ENCODE measurements at regions of chr19 and their contacts with region 1.

Region 1: DNA sequence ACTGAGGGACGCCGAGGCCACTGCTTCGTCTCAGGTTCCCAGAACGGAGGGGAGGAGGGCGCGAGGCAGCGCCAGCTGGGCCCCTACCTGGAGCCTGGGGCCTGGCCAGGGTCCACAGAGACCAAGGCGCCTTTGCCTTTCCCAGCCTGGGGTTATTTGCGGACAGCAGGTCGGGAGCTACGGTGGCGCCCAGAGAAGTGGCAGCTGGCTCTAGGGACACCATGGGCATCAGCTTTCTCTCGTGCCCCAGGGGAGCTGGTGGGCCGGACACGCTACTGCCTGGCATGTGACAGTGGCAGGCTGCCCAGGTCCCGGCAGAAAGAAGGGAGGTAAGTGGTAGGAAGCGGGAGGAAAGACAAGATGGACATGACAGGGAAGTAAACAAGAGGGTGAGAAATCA is 19.0 kb downstream of the AKT2 start:
- DNase-seq: no peak
- H3K4me3 ChIP-seq: no peak overlapping the region
- H3K27ac ChIP-seq: no peak overlapping the region
- H3K4me1 ChIP-seq: peaks cover 0 to 7% (median 1%) of the 10 kb centered on the region in 4 experiments; a peak in 3 of 7 replicates
- H3K27me3 ChIP-seq: no peaks in the 10 kb centered on the region
- CTCF ChIP-seq: no peak
- EP300 ChIP-seq: no peak
- POLR2A ChIP-seq: no peak
- RAD21 ChIP-seq: no peak

Region 2: DNA sequence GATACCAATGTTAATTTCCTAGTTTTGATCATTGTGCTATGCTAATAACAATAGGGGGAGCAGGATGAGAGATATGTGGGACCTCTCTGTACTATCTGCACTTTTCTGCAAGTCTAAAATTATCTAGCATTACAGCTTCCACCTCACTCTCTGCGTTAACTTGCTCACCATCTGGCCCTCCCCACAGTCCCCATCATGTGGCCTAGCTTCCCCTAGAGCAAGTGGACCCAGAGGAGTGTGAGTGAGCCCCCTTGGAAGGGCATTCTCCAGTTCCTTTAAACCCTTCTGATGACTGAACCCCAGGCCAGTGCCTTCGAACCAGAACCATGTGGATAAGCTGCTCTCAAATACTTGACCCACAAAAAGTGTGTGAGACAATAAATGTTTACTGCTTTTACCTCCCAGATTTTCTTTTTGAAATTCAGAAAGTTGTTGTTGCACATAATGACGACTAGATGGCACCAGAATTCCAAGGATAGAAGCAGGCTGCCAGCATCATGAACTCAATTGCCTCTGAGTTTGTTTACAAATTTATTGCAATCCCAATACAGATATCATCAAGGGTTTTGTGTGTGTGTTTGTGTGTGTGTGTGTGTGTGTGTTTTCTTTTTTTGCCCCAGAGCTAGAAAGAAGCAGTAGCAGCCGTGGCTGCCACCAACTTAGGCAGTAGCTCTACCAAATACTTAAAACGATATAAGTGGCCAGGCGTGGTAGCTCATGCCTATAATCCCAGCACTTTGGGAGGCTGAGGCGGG is 126.4 kb before region 1 on chr19:
- CTCF ChIA-PET with region 1: interaction called, 12 read pairs
- POLR2A ChIA-PET with region 1: no interaction called
- DNase-seq: peak in 1 of 2 experiments; percentile 47
- H3K4me3 ChIP-seq: no peak overlapping the region
- H3K27ac ChIP-seq: no peak overlapping the region
- H3K4me1 ChIP-seq: no peaks in the 10 kb centered on the region
- H3K27me3 ChIP-seq: no peaks in the 10 kb centered on the region; a peak in 1 of 7 replicates
- CTCF ChIP-seq: peak in 2 of 3 experiments; percentile 66 to 69; a peak in 3 of 4 replicates
- EP300 ChIP-seq: no peak
- POLR2A ChIP-seq: no peak
- RAD21 ChIP-seq: peak; percentile 94 to 96

Region 3: DNA sequence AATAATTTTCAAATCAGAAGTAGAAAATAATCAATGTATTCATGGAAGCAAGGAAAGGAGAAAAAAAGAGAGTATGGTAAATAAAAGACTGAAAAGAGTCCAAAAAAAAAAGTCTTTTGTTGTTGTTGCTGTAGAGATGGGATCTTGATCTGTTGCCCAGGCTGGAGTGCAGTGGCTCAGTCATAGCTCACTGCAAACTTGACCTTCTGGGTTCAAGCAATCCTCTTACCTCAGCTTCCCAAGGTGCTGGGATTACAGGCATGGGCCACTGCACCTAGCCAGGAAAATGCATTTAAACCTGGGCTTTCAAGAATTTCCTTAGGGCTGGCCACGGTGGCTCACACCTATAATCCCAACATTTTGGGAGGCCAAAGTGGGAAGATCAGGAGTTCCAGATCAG is 81.8 kb before region 1 on chr19:
- CTCF ChIA-PET with region 1: no interaction called
- POLR2A ChIA-PET with region 1: no interaction called
- DNase-seq: no peak
- H3K4me3 ChIP-seq: no peak overlapping the region
- H3K27ac ChIP-seq: no peak overlapping the region
- H3K4me1 ChIP-seq: no peaks in the 10 kb centered on the region; a peak in 1 of 7 replicates
- H3K27me3 ChIP-seq: no peaks in the 10 kb centered on the region; a peak in 1 of 7 replicates
- CTCF ChIP-seq: no peak
- EP300 ChIP-seq: no peak
- POLR2A ChIP-seq: no peak
- RAD21 ChIP-seq: no peak

Region 4: GRCh38 chr19:40221858-40222837 is 44.0 kb before region 1 on chr19:
- CTCF ChIA-PET with region 1: interaction called, 11 read pairs
- POLR2A ChIA-PET with region 1: no interaction called
- DNase-seq: peak; percentile 84 to 91
- H3K4me3 ChIP-seq: no peak overlapping the region
- H3K27ac ChIP-seq: no peak overlapping the region
- H3K4me1 ChIP-seq: peaks cover 0 to 4% (median 3%) of the 10 kb centered on the region in 4 experiments; a peak in 5 of 7 replicates
- H3K27me3 ChIP-seq: peaks cover 3 to 28% (median 19%) of the 10 kb centered on the region in 4 experiments
- CTCF ChIP-seq: peak; percentile 48 to 92 (median 84)
- EP300 ChIP-seq: no peak
- POLR2A ChIP-seq: no peak
- RAD21 ChIP-seq: peak; percentile 79 to 87

Region 5: GRCh38 chr19:40231544-40232424 is 34.3 kb before region 1 on chr19:
- CTCF ChIA-PET with region 1: interaction called, 13 read pairs
- POLR2A ChIA-PET with region 1: no interaction called
- DNase-seq: no peak
- H3K4me3 ChIP-seq: no peak overlapping the region
- H3K27ac ChIP-seq: peak overlapping the region; percentile 52; the same call in 1 of the 2 replicates
- H3K4me1 ChIP-seq: peaks cover 0 to 20% (median 13%) of the 10 kb centered on the region in 4 experiments; a peak in 6 of 7 replicates
- H3K27me3 ChIP-seq: peaks cover 0 to 13% (median 4%) of the 10 kb centered on the region in 4 experiments; a peak in 4 of 7 replicates
- CTCF ChIP-seq: no peak
- EP300 ChIP-seq: no peak
- POLR2A ChIP-seq: peak in 1 of 2 experiments; percentile 44; a peak in 1 of 3 replicates
- RAD21 ChIP-seq: no peak

Region 6: GRCh38 chr19:40246292-40247073 is 19.6 kb before region 1 on chr19:
- CTCF ChIA-PET with region 1: interaction called, 10 read pairs
- POLR2A ChIA-PET with region 1: interaction called, 3 read pairs
- DNase-seq: no peak
- H3K4me3 ChIP-seq: no peak overlapping the region
- H3K27ac ChIP-seq: no peak overlapping the region
- H3K4me1 ChIP-seq: no peaks in the 10 kb centered on the region; a peak in 1 of 7 replicates
- H3K27me3 ChIP-seq: no peaks in the 10 kb centered on the region
- CTCF ChIP-seq: no peak
- EP300 ChIP-seq: no peak
- POLR2A ChIP-seq: no peak
- RAD21 ChIP-seq: no peak

Region 7: DNA sequence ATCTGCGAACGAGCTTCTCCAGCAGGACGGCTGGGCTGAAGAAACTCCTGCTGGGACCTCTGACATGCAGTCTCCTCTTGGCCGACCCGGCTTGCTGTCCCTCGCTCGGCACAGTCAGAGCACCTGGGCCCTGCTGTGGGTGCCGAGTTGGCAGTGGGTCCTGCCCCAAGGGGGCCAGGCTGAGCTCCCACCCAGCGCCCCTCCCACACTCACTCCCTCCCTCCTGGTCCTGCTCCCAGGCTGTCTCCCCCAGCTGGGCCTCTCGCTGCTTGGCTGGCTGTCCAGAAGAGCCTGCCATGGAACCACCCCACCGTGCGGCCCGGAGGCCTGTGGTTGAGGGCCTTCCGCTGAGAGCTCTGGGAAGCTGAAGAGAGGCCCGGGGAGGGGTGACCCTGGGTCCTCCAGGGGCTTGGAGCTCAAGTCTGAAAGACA is 13.0 kb after region 1 on chr19:
- CTCF ChIA-PET with region 1: interaction called, 10 read pairs
- POLR2A ChIA-PET with region 1: interaction called, 17 read pairs
- DNase-seq: no peak
- H3K4me3 ChIP-seq: no peak overlapping the region
- H3K27ac ChIP-seq: no peak overlapping the region
- H3K4me1 ChIP-seq: peaks cover 0 to 28% (median 18%) of the 10 kb centered on the region in 4 experiments; a peak in 6 of 7 replicates
- H3K27me3 ChIP-seq: no peaks in the 10 kb centered on the region
- CTCF ChIP-seq: no peak
- EP300 ChIP-seq: no peak
- POLR2A ChIP-seq: no peak
- RAD21 ChIP-seq: no peak

Measured in H1 (cell line).